H1 (cell line): ENCODE measurements at regions of chr20 and their contacts with region 1.

Region 1: DNA sequence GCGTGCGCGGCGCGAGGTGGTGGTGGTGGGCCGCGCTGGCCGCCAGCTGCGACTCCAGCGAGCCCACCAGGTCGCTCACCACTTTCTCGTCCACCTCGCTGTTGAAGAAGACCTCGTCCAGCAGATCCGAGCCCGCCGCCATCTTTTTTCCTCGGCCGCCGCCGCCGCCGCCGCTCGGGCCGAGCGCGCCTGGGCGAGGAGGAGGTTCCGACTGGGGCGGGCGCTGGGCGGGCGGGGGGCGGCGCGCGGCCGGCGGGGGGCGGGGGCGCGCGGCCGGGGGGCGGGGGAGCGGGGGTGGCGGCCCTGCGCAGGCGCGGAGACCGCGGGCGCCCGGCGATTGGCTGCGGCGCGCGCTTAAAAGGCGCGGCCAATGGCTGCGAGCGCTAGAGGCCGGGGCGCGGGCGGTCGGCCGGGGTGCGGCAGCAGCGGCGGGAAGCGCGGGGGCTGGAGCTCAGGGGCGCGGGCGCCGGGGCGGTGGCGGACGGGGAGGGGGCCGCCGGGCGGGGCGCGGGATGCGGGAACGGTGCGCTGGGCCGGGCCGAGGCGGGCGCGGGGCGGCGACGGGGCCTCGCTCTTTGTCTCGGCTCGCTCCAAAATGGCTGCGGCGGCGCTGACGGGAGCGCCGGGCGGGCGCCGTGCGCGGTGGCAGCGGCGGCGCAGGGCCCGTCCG is at the start of gene TAF4:
- DNase-seq: peak in 1 of 2 experiments; percentile 80
- H3K4me3 ChIP-seq: peak within 1 kb of the TSS; percentile 51 to 97 (median 72)
- H3K27ac ChIP-seq: peak within 1 kb of the TSS; percentile 87
- H3K4me1 ChIP-seq: peaks cover 5 to 18% (median 14%) of the 10 kb centered on the region in 4 experiments
- H3K27me3 ChIP-seq: no peaks in the 10 kb centered on the region
- CTCF ChIP-seq: no peak
- EP300 ChIP-seq: no peak
- POLR2A ChIP-seq: peak; percentile 78 to 98
- RAD21 ChIP-seq: no peak
- total RNA-seq, gene TAF4: 30.1 and 33.0 TPM in 2 replicates

Region 2: GRCh38 chr20:61908057-61909026 is 157.5 kb before region 1 on chr20:
- CTCF ChIA-PET with region 1: no interaction called
- POLR2A ChIA-PET with region 1: no interaction called
- DNase-seq: no peak
- H3K4me3 ChIP-seq: no peak overlapping the region
- H3K27ac ChIP-seq: no peak overlapping the region
- H3K4me1 ChIP-seq: no peaks in the 10 kb centered on the region; a peak in 1 of 7 replicates
- H3K27me3 ChIP-seq: no peaks in the 10 kb centered on the region; a peak in 1 of 7 replicates
- CTCF ChIP-seq: no peak
- EP300 ChIP-seq: no peak
- POLR2A ChIP-seq: no peak
- RAD21 ChIP-seq: no peak

Region 3: DNA sequence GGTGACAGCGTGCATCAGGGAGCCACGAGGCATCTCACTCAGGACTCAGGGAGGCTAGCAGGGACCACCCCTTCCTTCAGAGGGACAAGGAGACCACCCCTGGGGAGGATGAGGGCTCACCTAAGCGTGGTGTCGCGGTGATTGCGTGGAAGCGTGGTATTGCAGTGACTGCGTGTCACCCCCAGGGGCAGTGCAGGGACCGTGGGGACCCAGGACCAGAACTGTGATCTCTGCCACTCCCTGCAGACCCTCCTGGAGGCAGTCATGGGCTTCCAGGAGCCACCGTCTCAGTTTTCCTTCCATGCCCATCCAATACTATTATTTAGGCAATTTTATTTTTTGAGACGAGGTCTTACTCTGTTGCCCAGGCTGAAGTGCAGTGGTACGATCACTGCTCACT is 147.3 kb before region 1 on chr20:
- CTCF ChIA-PET with region 1: no interaction called
- POLR2A ChIA-PET with region 1: no interaction called
- DNase-seq: no peak
- H3K4me3 ChIP-seq: no peak overlapping the region
- H3K27ac ChIP-seq: no peak overlapping the region
- H3K4me1 ChIP-seq: no peaks in the 10 kb centered on the region
- H3K27me3 ChIP-seq: no peaks in the 10 kb centered on the region
- CTCF ChIP-seq: peak; percentile 78 to 92 (median 87)
- EP300 ChIP-seq: no peak
- POLR2A ChIP-seq: no peak
- RAD21 ChIP-seq: peak; percentile 64 to 71

Region 4: GRCh38 chr20:62010551-62011402 is 55.0 kb before region 1 on chr20:
- CTCF ChIA-PET with region 1: interaction called, 10 read pairs
- POLR2A ChIA-PET with region 1: interaction called, 13 read pairs
- DNase-seq: peak; percentile 23 to 70
- H3K4me3 ChIP-seq: no peak overlapping the region
- H3K27ac ChIP-seq: no peak overlapping the region
- H3K4me1 ChIP-seq: peaks cover 0 to 2% (median 0%) of the 10 kb centered on the region in 4 experiments; a peak in 3 of 7 replicates
- H3K27me3 ChIP-seq: no peaks in the 10 kb centered on the region
- CTCF ChIP-seq: peak; percentile 43 to 77 (median 62)
- EP300 ChIP-seq: no peak
- POLR2A ChIP-seq: no peak
- RAD21 ChIP-seq: peak; percentile 92 to 93

Region 5: GRCh38 chr20:62052842-62053464 is 12.9 kb before region 1 on chr20:
- CTCF ChIA-PET with region 1: interaction called, 4 read pairs
- POLR2A ChIA-PET with region 1: interaction called, 10 read pairs
- DNase-seq: no peak
- H3K4me3 ChIP-seq: no peak overlapping the region
- H3K27ac ChIP-seq: no peak overlapping the region
- H3K4me1 ChIP-seq: peaks cover 0 to 6% (median 3%) of the 10 kb centered on the region in 4 experiments; a peak in 2 of 7 replicates
- H3K27me3 ChIP-seq: no peaks in the 10 kb centered on the region
- CTCF ChIP-seq: no peak
- EP300 ChIP-seq: no peak
- POLR2A ChIP-seq: no peak
- RAD21 ChIP-seq: no peak

Region 6: DNA sequence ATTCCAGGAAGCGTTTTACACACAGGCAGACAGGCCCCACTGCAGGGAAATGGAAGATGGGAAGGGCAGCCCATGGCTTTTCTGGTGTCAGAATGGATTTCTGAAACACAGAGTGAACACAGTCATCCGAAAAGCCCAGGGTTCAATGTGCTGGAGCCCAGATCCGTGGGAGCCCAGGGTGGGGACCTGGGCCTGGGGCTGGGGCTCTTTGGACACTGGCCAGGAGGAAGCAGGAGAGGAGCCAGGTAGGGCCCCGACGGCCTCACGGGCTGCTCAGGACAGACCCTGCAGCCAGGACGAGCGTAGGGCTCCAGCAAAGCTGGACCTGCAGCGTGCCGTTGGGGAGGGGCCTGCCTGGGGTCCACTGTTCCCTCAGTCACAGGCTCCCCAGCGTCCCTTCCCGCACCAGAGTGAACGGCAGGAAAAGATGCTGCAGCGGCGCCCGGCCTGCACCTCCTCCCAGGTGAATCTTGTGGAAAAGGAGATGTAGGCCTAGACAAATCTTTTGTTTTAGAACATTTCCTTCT is 32.1 kb after region 1 on chr20:
- CTCF ChIA-PET with region 1: interaction called, 8 read pairs
- POLR2A ChIA-PET with region 1: interaction called, 30 read pairs
- DNase-seq: no peak
- H3K4me3 ChIP-seq: no peak overlapping the region
- H3K27ac ChIP-seq: no peak overlapping the region
- H3K4me1 ChIP-seq: no peaks in the 10 kb centered on the region; a peak in 1 of 7 replicates
- H3K27me3 ChIP-seq: peaks cover 0 to 3% (median under 1%) of the 10 kb centered on the region in 4 experiments; a peak in 2 of 7 replicates
- CTCF ChIP-seq: no peak
- EP300 ChIP-seq: no peak
- POLR2A ChIP-seq: no peak
- RAD21 ChIP-seq: no peak

Region 7: DNA sequence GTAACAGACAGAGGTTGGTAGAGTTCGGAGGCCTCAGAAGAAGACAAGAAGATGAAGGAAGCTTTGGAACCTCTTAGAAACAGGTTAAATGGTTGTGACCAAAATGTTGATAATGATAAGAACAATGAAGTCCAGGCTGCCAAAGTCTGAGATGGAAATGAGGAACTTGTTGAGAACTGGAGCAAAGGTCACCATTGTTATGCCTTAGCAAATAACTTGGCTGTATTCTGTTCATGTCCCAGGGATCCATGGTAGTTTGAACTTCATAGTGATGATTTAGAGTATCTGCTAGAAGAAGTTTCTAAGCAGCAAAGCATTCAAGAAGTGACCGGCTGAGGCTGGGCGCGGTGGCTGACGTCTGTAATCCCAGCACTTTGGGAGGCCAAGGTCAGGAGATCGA is 45.3 kb after region 1 on chr20:
- CTCF ChIA-PET with region 1: interaction called, 3 read pairs
- POLR2A ChIA-PET with region 1: interaction called, 25 read pairs
- DNase-seq: no peak
- H3K4me3 ChIP-seq: no peak overlapping the region
- H3K27ac ChIP-seq: no peak overlapping the region
- H3K4me1 ChIP-seq: peaks cover 0 to 3% (median 0%) of the 10 kb centered on the region in 4 experiments; a peak in 3 of 7 replicates
- H3K27me3 ChIP-seq: no peaks in the 10 kb centered on the region
- CTCF ChIP-seq: no peak
- EP300 ChIP-seq: no peak
- POLR2A ChIP-seq: no peak
- RAD21 ChIP-seq: no peak

Region 8: DNA sequence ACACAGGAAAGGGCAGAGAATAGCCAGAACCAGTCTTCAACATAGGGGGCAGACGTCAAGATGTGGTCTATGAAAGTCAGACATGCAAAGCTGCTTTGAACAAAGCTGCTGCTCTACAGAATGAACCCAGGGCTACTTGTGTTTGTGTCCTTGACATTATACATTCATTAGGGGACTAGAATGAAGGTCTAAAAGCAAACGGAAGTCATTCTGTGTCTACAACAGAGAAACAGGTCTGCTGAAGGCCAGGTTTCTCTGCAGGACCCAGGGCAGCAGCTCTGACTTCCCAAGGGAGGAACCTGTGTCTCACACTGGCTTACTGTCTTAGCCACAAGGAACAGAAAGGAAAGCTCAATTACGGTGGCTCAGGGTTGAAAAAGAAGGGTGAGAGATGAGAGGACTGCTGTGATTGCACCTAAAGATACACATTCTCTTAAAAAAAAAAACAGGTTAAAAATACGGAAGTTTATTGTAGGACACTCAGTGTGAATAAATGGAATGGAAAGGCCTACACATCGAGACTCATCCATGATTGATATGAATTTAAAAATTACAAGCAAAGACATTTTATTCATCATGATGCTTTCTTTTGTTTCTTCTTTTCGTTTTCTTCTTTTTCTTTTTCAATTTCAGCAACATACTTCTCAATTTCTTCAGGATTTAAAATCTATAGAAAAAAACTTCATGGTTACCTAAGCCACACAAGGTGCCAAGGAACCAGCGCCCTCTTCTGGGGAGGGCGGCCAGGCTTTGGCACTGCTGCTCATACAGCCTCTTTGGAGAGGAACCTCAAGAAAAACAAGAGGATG is 70.7 kb after region 1 on chr20:
- CTCF ChIA-PET with region 1: interaction called, 5 read pairs
- POLR2A ChIA-PET with region 1: interaction called, 24 read pairs
- DNase-seq: no peak
- H3K4me3 ChIP-seq: no peak overlapping the region
- H3K27ac ChIP-seq: no peak overlapping the region
- H3K4me1 ChIP-seq: peaks cover 0 to 1% (median 0%) of the 10 kb centered on the region in 4 experiments; a peak in 2 of 7 replicates
- H3K27me3 ChIP-seq: no peaks in the 10 kb centered on the region
- CTCF ChIP-seq: peak; percentile 76 to 90 (median 79)
- EP300 ChIP-seq: no peak
- POLR2A ChIP-seq: peak in 1 of 2 experiments; percentile 47; a peak in 1 of 3 replicates
- RAD21 ChIP-seq: peak; percentile 68 to 74

Region 9: GRCh38 chr20:62182613-62183425 is 117.0 kb after region 1 on chr20 and contains the start of gene MTG2:
- CTCF ChIA-PET with region 1: no interaction called
- POLR2A ChIA-PET with region 1: no interaction called
- DNase-seq: peak; percentile 90 to 93
- H3K4me3 ChIP-seq: peak within 1 kb of the TSS; percentile 81 to 93 (median 90)
- H3K27ac ChIP-seq: peak within 1 kb of the TSS; percentile 82
- H3K4me1 ChIP-seq: peaks cover 0 to 5% (median 1%) of the 10 kb centered on the region in 4 experiments; a peak in 3 of 7 replicates
- H3K27me3 ChIP-seq: no peaks in the 10 kb centered on the region
- CTCF ChIP-seq: no peak
- EP300 ChIP-seq: no peak; a peak in 1 of 3 replicates
- POLR2A ChIP-seq: peak; percentile 70 to 87
- RAD21 ChIP-seq: 0 out of 4 replicates have a peak, but pooled peaks of 1 of the 2 experiments have one; percentile 10
- total RNA-seq, gene MTG2: 22.8 and 24.1 TPM in 2 replicates

Region 10: GRCh38 chr20:62226707-62227590 is 161.1 kb after region 1 on chr20:
- CTCF ChIA-PET with region 1: no interaction called
- POLR2A ChIA-PET with region 1: no interaction called
- DNase-seq: no peak
- H3K4me3 ChIP-seq: no peak overlapping the region
- H3K27ac ChIP-seq: no peak overlapping the region
- H3K4me1 ChIP-seq: peaks cover 0 to 7% (median 5%) of the 10 kb centered on the region in 4 experiments; a peak in 5 of 7 replicates
- H3K27me3 ChIP-seq: peaks cover 0 to 24% (median 7%) of the 10 kb centered on the region in 4 experiments; a peak in 4 of 7 replicates
- CTCF ChIP-seq: no peak
- EP300 ChIP-seq: no peak
- POLR2A ChIP-seq: no peak
- RAD21 ChIP-seq: no peak